ENCODE measurements at regions of chr17 and their contacts with region 1.

Region 1: GRCh38 chr17:50269477-50270434 is 4.5 kb upstream of the TMEM92 start:
- DNase-seq: peak; percentile 74
- CTCF ChIP-seq: peak; percentile 73

Region 2: GRCh38 chr17:50289991-50290702 is 20.4 kb after region 1 on chr17:
- CTCF ChIA-PET with region 1: interaction called, 17 read pairs
- POLR2A ChIA-PET with region 1: no interaction called
- DNase-seq: no peak
- CTCF ChIP-seq: no peak

Measured in GM10248 (cell line).